ENCODE measurements at regions of chr7 and their contacts with region 1.

Region 1: DNA sequence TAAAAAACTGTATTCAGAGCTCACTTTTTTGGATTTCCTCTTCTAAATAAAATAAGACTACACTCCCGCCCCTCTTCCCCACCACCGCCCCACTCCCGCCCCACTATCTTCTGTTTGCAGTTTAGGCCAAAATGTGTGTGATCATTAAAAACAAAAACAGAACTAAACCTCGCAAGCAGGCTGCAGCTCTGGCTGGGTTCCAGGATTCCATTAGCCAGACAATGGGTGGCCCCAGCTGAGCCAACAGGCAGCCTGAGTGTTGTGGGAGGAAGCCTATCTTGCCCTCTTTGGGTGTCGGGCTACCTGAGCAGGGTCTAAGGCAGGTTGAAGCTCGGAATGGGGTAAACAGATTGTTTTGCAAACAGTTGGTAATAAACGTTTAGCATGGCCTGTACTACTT is 41.7 kb downstream of the ARL4A start:
- DNase-seq: no peak
- H3K4me3 Mint-ChIP-seq: no peak overlapping the region
- H3K27ac Mint-ChIP-seq: no peak overlapping the region
- H3K4me1 Mint-ChIP-seq: peaks cover 27% of the 10 kb centered on the region
- H3K27me3 Mint-ChIP-seq: no peaks in the 10 kb centered on the region

Region 2: DNA sequence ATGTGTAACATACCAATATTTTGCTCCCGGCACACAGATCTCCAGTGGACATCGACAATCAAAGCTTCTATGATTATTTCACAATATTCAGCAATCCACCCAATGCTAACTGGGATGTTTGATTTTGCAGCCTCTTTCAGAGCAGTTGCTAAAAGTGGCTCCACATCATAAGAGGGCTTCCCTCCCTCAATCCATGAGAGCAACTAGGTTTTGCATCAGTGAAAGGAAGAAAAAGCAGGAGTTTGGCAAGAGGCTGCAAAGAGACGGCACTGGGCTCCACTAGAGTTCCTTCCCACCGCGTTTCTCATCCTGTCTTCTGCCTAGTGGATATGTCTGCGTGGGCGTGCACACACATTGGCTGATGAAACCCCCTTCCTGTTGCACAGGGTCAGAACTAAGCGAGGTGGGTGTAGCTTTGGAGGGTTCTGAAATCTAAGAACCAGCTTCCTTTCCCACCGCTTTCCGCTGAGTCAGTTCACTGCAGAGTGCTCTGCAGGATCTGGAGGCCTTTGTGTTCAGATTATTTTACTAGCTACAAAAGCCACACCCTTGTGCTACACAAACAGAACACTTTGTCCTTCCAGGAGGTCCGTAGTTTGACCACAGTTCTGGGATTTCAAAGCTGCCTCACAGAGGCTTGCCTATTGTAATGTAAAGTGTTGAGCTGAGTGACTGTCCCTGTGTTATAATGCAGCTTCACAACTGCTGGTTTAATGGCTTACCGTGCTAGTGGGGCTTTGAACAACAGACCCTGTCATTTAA is 13.6 kb before region 1 on chr7:
- CTCF ChIA-PET with region 1: interaction called, 5 read pairs
- POLR2A ChIA-PET with region 1: interaction called, 13 read pairs
- DNase-seq: peak; percentile 55
- H3K4me3 Mint-ChIP-seq: no peak overlapping the region
- H3K27ac Mint-ChIP-seq: peak overlapping the region; percentile 76
- H3K4me1 Mint-ChIP-seq: peaks cover 44% of the 10 kb centered on the region
- H3K27me3 Mint-ChIP-seq: no peaks in the 10 kb centered on the region